ENCODE measurements at regions of chr1 and their contacts with region 1.

Region 1: GRCh38 chr1:97668945-97669344 is 251.9 kb downstream of the DPYD start:
- DNase-seq: no peak
- ATAC-seq: no peak
- H3K4me3 ChIP-seq: no peak overlapping the region
- H3K27ac ChIP-seq: no peak overlapping the region
- H3K4me1 ChIP-seq: no peaks in the 10 kb centered on the region
- H3K27me3 ChIP-seq: no peaks in the 10 kb centered on the region
- CTCF ChIP-seq: peak in 6 of 12 donors; percentile 15 to 22 (median 19)
- POLR2A ChIP-seq: no peak

Region 2: DNA sequence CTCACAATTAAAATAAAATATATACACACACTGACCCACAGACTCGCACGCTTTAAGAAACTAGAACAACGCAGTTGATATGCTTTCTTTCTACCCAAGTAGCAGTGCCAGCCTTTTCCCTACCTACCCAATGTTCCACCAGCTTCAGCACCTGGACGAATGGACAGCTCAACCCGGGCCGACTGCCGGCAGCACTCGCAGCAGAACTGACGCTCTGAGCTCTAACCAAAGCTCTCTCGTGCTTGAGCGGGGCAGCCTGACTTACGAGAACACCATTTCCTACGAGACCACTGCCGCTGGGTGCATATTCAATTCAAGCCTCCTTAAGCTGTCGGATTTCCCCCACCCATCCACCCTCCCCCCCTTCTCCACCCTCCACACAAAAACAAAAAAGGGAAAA is 379.3 kb after region 1 on chr1:
- intact Hi-C with region 1: loop called in 1 of 10 experiments (anchors 10 kb)
- DNase-seq: peak; percentile 72 to 85 (median 78)
- ATAC-seq: peak; percentile 72 to 94 (median 94)
- H3K4me3 ChIP-seq: peak overlapping the region in 1 of 12 donors; percentile 19
- H3K27ac ChIP-seq: no peak overlapping the region
- H3K4me1 ChIP-seq: peaks cover 0 to 33% (median 11%) of the 10 kb centered on the region in 12 donors
- H3K27me3 ChIP-seq: peaks cover 20 to 91% (median 66%) of the 10 kb centered on the region in 9 donors
- CTCF ChIP-seq: no peak
- POLR2A ChIP-seq: no peak